ENCODE measurements at regions of chr16 and their contacts with region 1.

Region 1: DNA sequence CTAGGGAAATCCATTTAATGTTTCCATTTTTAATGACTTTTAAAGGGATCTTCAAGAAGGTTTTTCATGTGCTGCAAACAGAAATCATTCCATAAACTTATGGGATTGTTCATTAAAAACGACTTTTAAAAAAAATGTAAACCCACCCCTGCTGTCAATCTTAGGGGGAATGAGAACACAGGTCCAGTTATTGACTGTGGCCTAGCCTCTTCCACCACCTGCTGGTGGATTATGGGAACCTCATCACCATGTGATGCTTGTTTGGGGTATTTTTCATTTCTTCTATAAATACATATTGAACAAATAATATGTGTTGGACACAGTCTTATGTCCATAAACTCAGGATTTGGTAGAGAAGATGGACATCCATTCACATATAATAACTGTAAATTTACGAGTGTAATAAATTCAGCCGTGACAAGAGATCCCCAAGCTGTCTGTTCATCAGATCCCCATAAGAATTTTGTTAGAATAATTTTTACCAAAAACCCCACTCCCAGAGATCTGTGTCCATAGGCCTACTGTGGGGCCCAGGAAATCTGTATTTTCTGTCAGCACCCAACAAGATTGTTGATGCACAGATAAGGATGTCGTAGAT is 42.0 kb upstream of the TMC5 start:
- DNase-seq: peak; percentile 55 to 62
- H3K4me3 ChIP-seq: no peak overlapping the region
- H3K27ac ChIP-seq: 0 out of 2 replicates have a peak overlapping the region, but pooled peaks have one; percentile 2
- H3K4me1 ChIP-seq: no peaks in the 10 kb centered on the region; the same call in 1 of the 2 replicates
- H3K27me3 ChIP-seq: no peaks in the 10 kb centered on the region
- CTCF ChIP-seq: peak; percentile 95

Region 2: GRCh38 chr16:18983565-18984424 is 391.9 kb before region 1 on chr16 and contains the start of gene TMC7:
- CTCF ChIA-PET with region 1: no interaction called
- POLR2A ChIA-PET with region 1: no interaction called
- intact Hi-C with region 1: loop called (anchors 1 kb)
- DNase-seq: peak; percentile 70 to 94
- H3K4me3 ChIP-seq: peak within 1 kb of the TSS; percentile 74
- H3K27ac ChIP-seq: no peak within 1 kb of the TSS
- H3K4me1 ChIP-seq: peaks cover 28% of the 10 kb centered on the region
- H3K27me3 ChIP-seq: no peaks in the 10 kb centered on the region
- CTCF ChIP-seq: peak; percentile 79
- total RNA-seq, gene TMC7: 4.3 and 4.4 TPM in 2 replicates

Region 3: DNA sequence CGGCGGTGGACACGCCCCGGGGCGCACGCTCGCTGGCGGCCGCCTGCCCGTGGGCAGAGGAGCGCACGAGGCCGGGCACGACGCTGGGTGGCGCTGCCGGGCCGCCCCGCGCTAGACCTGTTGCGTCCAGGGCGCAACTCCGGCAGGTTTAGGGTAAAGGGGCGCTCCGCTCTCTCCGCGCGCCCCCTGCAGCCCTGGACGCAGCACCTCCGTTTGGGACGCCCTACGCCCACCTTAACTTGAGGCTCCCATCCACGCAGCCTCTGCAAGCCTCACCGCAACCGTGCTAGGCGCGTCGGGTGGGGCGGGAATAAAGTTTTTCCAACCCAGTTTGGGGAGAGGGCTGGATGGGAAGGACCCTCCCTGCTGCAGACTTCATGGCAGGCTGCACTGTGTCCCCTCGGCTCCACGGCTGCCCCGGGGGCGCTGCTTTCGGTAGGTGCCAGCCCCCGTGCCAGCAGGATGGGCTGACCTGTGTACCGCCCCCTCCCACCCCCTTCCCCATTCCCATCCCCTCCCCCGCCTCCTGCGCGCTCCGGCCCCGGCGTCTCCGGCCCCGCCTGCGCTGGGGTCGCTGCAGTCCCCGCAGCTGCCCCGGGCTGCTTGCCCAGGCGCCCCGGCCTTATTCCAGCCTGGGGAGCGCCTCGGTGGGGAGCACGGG is 207.8 kb before region 1 on chr16 and contains the start of gene SYT17:
- CTCF ChIA-PET with region 1: no interaction called
- POLR2A ChIA-PET with region 1: no interaction called
- intact Hi-C with region 1: loop called (anchors 1 kb)
- DNase-seq: peak; percentile 60 to 90
- H3K4me3 ChIP-seq: peak within 1 kb of the TSS; percentile 96
- H3K27ac ChIP-seq: 0 out of 2 replicates have a peak within 1 kb of the TSS, but pooled peaks have one; percentile 25
- H3K4me1 ChIP-seq: peaks cover 33% of the 10 kb centered on the region
- H3K27me3 ChIP-seq: no peaks in the 10 kb centered on the region
- CTCF ChIP-seq: peak; percentile 75
- total RNA-seq, gene SYT17: 36.6 and 45.2 TPM in 2 replicates

Region 4: GRCh38 chr16:19179546-19180490 is 195.8 kb before region 1 on chr16:
- CTCF ChIA-PET with region 1: interaction called, 5 read pairs
- POLR2A ChIA-PET with region 1: interaction called, 3 read pairs
- intact Hi-C with region 1: loop called (anchors 5 kb)
- DNase-seq: peak; percentile 56 to 63
- H3K4me3 ChIP-seq: no peak overlapping the region
- H3K27ac ChIP-seq: no peak overlapping the region
- H3K4me1 ChIP-seq: peaks cover 31% of the 10 kb centered on the region
- H3K27me3 ChIP-seq: no peaks in the 10 kb centered on the region
- CTCF ChIP-seq: peak; percentile 90

Region 5: GRCh38 chr16:19210280-19210924 is 165.3 kb before region 1 on chr16:
- CTCF ChIA-PET with region 1: no interaction called
- POLR2A ChIA-PET with region 1: no interaction called
- intact Hi-C with region 1: loop called (anchors 10 kb)
- DNase-seq: peak; percentile 57 to 78
- H3K4me3 ChIP-seq: no peak overlapping the region
- H3K27ac ChIP-seq: peak overlapping the region; percentile 54
- H3K4me1 ChIP-seq: peaks cover 25% of the 10 kb centered on the region
- H3K27me3 ChIP-seq: no peaks in the 10 kb centered on the region
- CTCF ChIP-seq: no peak

Region 6: DNA sequence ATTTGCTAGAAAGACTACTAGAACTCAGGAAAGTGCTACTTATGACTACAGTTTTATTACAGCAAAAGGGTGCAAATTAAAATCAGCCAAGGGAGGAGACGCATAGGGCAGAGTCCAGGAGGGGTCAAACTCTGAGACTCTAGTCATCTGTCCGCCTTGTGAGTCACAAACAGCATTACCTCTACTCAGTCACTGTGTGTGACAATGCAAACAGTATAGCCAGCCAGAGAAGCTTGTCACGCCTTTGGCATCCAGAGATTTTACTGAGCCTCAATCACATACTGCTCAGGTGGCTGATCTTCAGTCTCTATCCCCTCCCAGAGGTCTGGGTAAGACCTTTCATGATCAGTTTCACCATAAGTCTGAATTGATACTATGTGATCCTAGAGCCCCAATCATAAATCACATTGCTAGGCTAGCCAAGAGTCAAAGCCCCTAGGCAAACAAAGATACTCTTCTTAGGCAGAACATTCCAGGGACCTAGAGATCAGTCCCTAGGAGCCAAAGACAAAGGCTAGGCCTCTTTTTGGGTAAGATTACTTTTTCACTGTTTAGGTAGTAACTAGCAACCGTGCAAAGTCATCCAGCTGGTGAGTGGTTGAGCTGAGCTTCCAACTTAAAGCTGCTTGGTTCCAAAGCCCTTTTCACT is 139.0 kb before region 1 on chr16:
- CTCF ChIA-PET with region 1: no interaction called
- POLR2A ChIA-PET with region 1: no interaction called
- intact Hi-C with region 1: loop called (anchors 5 kb)
- DNase-seq: peak; percentile 44 to 89
- H3K4me3 ChIP-seq: no peak overlapping the region
- H3K27ac ChIP-seq: peak overlapping the region; percentile 75
- H3K4me1 ChIP-seq: peaks cover 21% of the 10 kb centered on the region
- H3K27me3 ChIP-seq: no peaks in the 10 kb centered on the region
- CTCF ChIP-seq: no peak

Region 7: GRCh38 chr16:19284207-19284606 is 91.5 kb before region 1 on chr16:
- CTCF ChIA-PET with region 1: interaction called, 3 read pairs
- POLR2A ChIA-PET with region 1: no interaction called
- intact Hi-C with region 1: loop called (anchors 10 kb)
- DNase-seq: peak; percentile 90 to 95
- H3K4me3 ChIP-seq: no peak overlapping the region
- H3K27ac ChIP-seq: peak overlapping the region; percentile 76
- H3K4me1 ChIP-seq: peaks cover 23% of the 10 kb centered on the region
- H3K27me3 ChIP-seq: no peaks in the 10 kb centered on the region
- CTCF ChIP-seq: no peak

Measured in PC-9 (cell line).